ENCODE measurements at regions of chr3 and their contacts with region 1.

Region 1: DNA sequence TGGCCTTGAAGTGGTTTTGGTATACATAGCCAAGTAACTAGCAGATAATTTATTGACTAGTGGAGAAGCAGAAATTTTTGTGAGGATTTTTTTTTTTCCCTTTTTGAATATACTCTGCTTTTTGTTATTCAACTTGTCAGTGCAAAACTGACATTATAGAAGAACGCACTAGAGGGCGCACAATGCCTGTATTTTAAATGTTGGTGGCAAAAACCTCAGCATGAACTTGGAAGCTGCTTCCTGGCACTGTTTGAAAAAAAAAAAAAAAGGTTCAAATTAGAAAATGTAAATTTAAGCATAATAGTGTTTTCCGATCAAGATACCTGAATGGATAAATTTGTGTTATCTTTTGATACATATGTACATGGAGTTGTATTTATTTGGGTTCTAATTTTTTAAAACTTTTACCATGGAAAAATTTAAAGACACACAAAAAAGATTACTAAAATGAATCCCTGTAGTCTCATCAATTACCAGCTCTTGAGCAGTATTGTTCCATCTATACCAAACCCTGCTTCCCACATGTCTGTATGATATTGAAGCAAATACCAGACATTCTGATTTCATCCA is 56.0 kb downstream of the SLC25A26 start:
- DNase-seq: peak; percentile 75
- H3K4me3 ChIP-seq: no peak overlapping the region
- H3K27ac ChIP-seq: peak overlapping the region in 3 of 4 donors; percentile 32 to 59 (median 58)
- H3K4me1 ChIP-seq: peaks cover 0 to 32% (median 10%) of the 10 kb centered on the region in 4 donors
- H3K27me3 ChIP-seq: no peaks in the 10 kb centered on the region
- CTCF ChIP-seq: peak; percentile 55 to 61 (median 58)
- EP300 ChIP-seq: no peak
- POLR2A ChIP-seq: no peak

Region 2: GRCh38 chr3:66372681-66373350 is 96.0 kb after region 1 on chr3:
- intact Hi-C with region 1: loop called (anchors 2 kb)
- DNase-seq: no peak
- H3K4me3 ChIP-seq: no peak overlapping the region
- H3K27ac ChIP-seq: peak overlapping the region in 3 of 4 donors; percentile 40 to 54 (median 52)
- H3K4me1 ChIP-seq: peaks cover 0 to 24% (median 18%) of the 10 kb centered on the region in 4 donors
- H3K27me3 ChIP-seq: no peaks in the 10 kb centered on the region
- CTCF ChIP-seq: peak in 3 of 4 experiments; percentile 17 to 40 (median 40)
- EP300 ChIP-seq: no peak
- POLR2A ChIP-seq: no peak

Region 3: DNA sequence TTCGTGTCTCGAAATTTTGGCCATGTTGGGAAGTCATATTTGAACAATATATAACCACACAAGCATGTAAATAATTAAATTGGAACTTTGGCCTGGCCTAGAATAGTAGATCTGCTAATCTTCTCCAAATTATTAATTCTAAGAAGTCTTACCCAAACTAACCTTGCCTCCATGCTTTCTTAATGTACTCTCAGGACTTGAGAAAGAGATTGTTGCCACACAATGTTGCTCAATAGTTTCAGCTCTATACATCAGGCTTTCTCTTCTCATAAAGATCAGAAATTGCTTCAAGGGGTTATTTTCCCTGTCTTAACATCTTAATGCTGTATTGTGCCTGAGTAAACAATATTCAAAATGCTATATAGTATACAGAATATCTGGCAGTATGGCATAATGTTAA is 426.7 kb after region 1 on chr3:
- intact Hi-C with region 1: loop called (anchors 5 kb)
- DNase-seq: no peak
- H3K4me3 ChIP-seq: no peak overlapping the region
- H3K27ac ChIP-seq: peak overlapping the region in 3 of 4 donors; percentile 68 to 83 (median 80)
- H3K4me1 ChIP-seq: peaks cover 0 to 59% (median 53%) of the 10 kb centered on the region in 4 donors
- H3K27me3 ChIP-seq: no peaks in the 10 kb centered on the region
- CTCF ChIP-seq: no peak
- EP300 ChIP-seq: no peak
- POLR2A ChIP-seq: no peak

Region 4: GRCh38 chr3:66836363-66837152 is 559.8 kb after region 1 on chr3:
- intact Hi-C with region 1: loop called (anchors 5 kb)
- DNase-seq: no peak
- H3K4me3 ChIP-seq: no peak overlapping the region
- H3K27ac ChIP-seq: no peak overlapping the region
- H3K4me1 ChIP-seq: peaks cover 0 to 8% (median 0%) of the 10 kb centered on the region in 4 donors
- H3K27me3 ChIP-seq: no peaks in the 10 kb centered on the region
- CTCF ChIP-seq: peak; percentile 12 to 29 (median 18)
- EP300 ChIP-seq: no peak
- POLR2A ChIP-seq: no peak